Naive thymus-derived CD4-positive, alpha-beta T cell (primary cell): ENCODE measurements at regions of chr11 and their contacts with region 1.

Region 1: DNA sequence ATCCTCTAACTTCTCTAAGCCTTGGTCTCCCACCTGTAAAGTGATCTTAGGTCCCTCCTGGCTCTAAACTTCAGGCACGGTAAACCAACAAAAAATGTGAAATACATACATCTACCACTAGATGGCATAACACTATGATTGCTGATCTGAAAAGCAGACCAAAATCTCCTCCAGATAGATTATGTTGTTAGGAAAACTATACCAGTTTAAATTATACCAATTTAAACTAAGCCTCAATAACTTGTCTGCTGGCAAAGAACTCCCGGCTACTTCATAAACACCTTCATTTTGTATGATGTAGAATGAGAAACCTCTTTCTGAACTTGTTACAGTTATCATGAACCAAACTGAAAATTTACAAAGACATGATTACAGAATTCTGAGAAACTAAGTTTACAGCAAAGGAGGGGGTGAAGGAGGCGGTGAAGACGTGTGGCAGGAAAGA is 85.9 kb downstream of the SBF2 start:
- DNase-seq: peak in 7 of 9 donors; percentile 10 to 55 (median 44)
- ATAC-seq: peak; percentile 82
- H3K4me3 ChIP-seq: no peak overlapping the region
- H3K4me3 Mint-ChIP-seq: no peak overlapping the region
- H3K27ac ChIP-seq: no peak overlapping the region
- H3K27ac Mint-ChIP-seq: no peak overlapping the region
- H3K4me1 ChIP-seq: no peaks in the 10 kb centered on the region
- H3K4me1 Mint-ChIP-seq: no peaks in the 10 kb centered on the region
- H3K27me3 ChIP-seq: no peaks in the 10 kb centered on the region
- H3K27me3 Mint-ChIP-seq: peaks cover 0 to 16% (median 0%) of the 10 kb centered on the region in 5 donors

Region 2: GRCh38 chr11:10247011-10247410 is 38.9 kb after region 1 on chr11:
- CTCF ChIA-PET with region 1: no interaction called
- POLR2A ChIA-PET with region 1: no interaction called
- intact Hi-C with region 1: loop called in 1 of 2 experiments (anchors 1 kb)
- DNase-seq: no peak
- ATAC-seq: no peak
- H3K4me3 ChIP-seq: no peak overlapping the region
- H3K4me3 Mint-ChIP-seq: no peak overlapping the region
- H3K27ac ChIP-seq: no peak overlapping the region
- H3K27ac Mint-ChIP-seq: peak overlapping the region in 1 of 9 donors; percentile 36
- H3K4me1 ChIP-seq: no peaks in the 10 kb centered on the region
- H3K4me1 Mint-ChIP-seq: peaks cover 0 to 12% (median 7%) of the 10 kb centered on the region in 7 donors
- H3K27me3 ChIP-seq: no peaks in the 10 kb centered on the region
- H3K27me3 Mint-ChIP-seq: peaks cover 0 to 2% (median 0%) of the 10 kb centered on the region in 5 donors

Region 3: GRCh38 chr11:10322830-10323792 is 115.0 kb after region 1 on chr11:
- CTCF ChIA-PET with region 1: interaction called, 3 read pairs
- POLR2A ChIA-PET with region 1: no interaction called
- intact Hi-C with region 1: loop called (anchors 1 kb)
- DNase-seq: peak in 8 of 9 donors; percentile 10 to 70 (median 48)
- ATAC-seq: peak; percentile 70
- H3K4me3 ChIP-seq: no peak overlapping the region
- H3K4me3 Mint-ChIP-seq: peak overlapping the region in 1 of 10 donors; percentile 26
- H3K27ac ChIP-seq: no peak overlapping the region
- H3K27ac Mint-ChIP-seq: peak overlapping the region in 5 of 9 donors; percentile 16 to 82 (median 55)
- H3K4me1 ChIP-seq: no peaks in the 10 kb centered on the region
- H3K4me1 Mint-ChIP-seq: peaks cover 0 to 11% (median 3%) of the 10 kb centered on the region in 7 donors
- H3K27me3 ChIP-seq: no peaks in the 10 kb centered on the region
- H3K27me3 Mint-ChIP-seq: peaks cover 4 to 20% (median 8%) of the 10 kb centered on the region in 5 donors

Region 4: GRCh38 chr11:10366568-10367370 is 158.6 kb after region 1 on chr11:
- CTCF ChIA-PET with region 1: interaction called, 3 read pairs
- POLR2A ChIA-PET with region 1: no interaction called
- intact Hi-C with region 1: loop called in 1 of 2 experiments (anchors 1 kb)
- DNase-seq: peak; percentile 7 to 57 (median 44)
- ATAC-seq: peak; percentile 94
- H3K4me3 ChIP-seq: no peak overlapping the region
- H3K4me3 Mint-ChIP-seq: peak overlapping the region in 3 of 10 donors; percentile 5 to 41 (median 36)
- H3K27ac ChIP-seq: no peak overlapping the region
- H3K27ac Mint-ChIP-seq: peak overlapping the region in 2 of 9 donors; percentile 0 to 7
- H3K4me1 ChIP-seq: no peaks in the 10 kb centered on the region
- H3K4me1 Mint-ChIP-seq: peaks cover 4 to 13% (median 8%) of the 10 kb centered on the region in 7 donors
- H3K27me3 ChIP-seq: no peaks in the 10 kb centered on the region
- H3K27me3 Mint-ChIP-seq: peaks cover 9 to 19% (median 15%) of the 10 kb centered on the region in 5 donors

Region 5: DNA sequence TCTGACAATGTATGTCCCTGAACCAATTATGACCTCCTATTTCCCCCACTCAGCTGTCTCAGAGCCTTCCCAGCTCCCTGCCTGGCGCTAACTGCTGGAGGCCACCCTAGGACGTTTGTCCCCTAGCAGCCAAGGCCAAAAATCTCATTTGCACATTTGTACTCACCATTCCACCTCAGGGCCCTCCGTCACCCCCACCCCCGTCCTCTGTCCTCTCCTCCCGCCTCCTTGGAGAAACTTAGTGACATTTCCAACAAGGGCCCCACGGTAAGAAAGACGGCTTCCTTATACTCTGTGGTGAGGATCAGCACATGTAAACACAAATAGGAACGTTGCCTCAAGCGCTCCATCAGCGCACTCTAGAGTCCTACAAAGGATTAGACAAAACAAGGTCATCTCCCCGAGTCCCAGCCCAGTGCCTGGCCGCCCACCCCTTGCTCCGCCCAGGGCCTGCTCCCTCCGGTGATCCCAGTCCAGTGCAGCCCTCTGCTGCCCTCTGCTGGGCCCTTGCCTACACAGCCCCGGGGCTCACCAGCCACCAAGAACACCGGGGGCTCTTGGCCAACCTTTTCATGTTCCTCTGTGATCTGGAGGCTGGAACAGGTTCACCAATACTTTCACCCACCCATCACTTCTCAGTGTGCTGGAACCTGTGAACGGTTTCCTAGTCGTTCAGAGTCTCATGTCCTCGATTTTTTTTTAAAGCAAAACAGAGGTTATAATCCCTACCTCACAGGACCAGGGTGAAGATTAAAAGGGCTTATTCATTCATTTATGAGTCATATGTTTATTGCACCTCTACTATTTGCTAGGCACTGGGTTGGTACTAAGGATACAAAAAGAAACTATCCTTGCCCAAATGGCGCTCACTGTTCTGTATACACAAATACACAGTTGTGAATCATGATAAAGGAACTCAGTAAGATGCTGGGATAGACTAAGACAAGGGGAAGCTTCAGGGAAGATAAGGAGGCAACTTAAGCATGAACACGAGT is 527.6 kb after region 1 on chr11:
- CTCF ChIA-PET with region 1: no interaction called
- POLR2A ChIA-PET with region 1: no interaction called
- intact Hi-C with region 1: loop called in 1 of 2 experiments (anchors 5 kb)
- DNase-seq: peak; percentile 62 to 92 (median 77)
- ATAC-seq: peak; percentile 100
- H3K4me3 ChIP-seq: no peak overlapping the region
- H3K4me3 Mint-ChIP-seq: peak overlapping the region in 8 of 10 donors; percentile 8 to 75 (median 62)
- H3K27ac ChIP-seq: no peak overlapping the region
- H3K27ac Mint-ChIP-seq: peak overlapping the region in 5 of 9 donors; percentile 31 to 71 (median 59)
- H3K4me1 ChIP-seq: peaks cover 0 to 4% of the 10 kb centered on the region in 2 donors
- H3K4me1 Mint-ChIP-seq: peaks cover 5 to 13% (median 8%) of the 10 kb centered on the region in 7 donors
- H3K27me3 ChIP-seq: no peaks in the 10 kb centered on the region
- H3K27me3 Mint-ChIP-seq: peaks cover 4 to 19% (median 12%) of the 10 kb centered on the region in 5 donors